Activated CD4-positive, alpha-beta T cell treated with anti-CD3 and anti-CD28 coated beads, Interleukin-2, amount 10 ng/mL, durations not matched to agents 7 days and 5 days (primary cell): ENCODE measurements at regions of chr10 and their contacts with region 1.

Region 1: DNA sequence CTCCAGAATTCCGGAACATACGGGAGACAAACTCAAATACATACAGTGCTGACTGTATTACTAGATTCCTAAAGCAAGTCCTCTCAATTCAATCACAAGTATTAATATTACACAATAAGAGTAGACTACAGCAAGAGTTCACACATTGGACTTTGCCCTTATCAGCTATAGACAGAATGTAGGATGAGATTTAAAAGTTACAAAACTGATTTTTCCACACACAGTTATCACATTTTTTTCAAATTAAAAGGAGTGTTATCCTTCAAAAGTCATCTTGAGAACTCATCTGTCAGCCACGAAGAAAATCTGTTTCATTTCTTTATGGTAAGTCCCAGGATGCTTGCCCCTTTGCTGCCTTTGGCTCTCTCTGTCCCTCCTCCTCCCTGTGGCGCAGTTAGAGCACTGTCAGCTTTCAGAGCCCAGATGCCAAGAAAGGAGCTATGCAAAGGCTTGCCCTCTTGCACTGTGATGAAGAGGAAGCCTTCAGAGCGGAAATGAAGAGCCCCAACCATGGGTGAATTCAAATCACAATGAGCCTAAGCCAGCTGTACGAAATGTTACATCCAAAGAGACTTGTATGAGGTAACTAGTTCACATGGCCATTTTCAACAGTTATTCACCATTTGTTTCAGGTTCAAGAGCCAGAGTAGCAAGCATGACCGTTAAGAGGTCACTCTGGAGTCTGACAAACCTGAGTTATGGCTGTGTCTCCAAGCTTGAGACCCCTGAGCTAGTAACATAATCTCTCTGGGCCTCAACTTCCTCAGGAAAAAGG is 10.7 kb downstream of the NCOA4 start:
- DNase-seq: peak; percentile 24
- H3K4me3 Mint-ChIP-seq: no peak overlapping the region
- H3K27ac Mint-ChIP-seq: peak overlapping the region; percentile 75
- H3K4me1 Mint-ChIP-seq: peaks cover 66% of the 10 kb centered on the region
- H3K27me3 Mint-ChIP-seq: no peaks in the 10 kb centered on the region

Region 2: GRCh38 chr10:46030091-46030937 is 10.6 kb after region 1 on chr10 and contains the start of gene NCOA4:
- CTCF ChIA-PET with region 1: interaction called, 15 read pairs
- POLR2A ChIA-PET with region 1: no interaction called
- DNase-seq: peak; percentile 98
- H3K4me3 Mint-ChIP-seq: peak within 1 kb of the TSS; percentile 98
- H3K27ac Mint-ChIP-seq: peak within 1 kb of the TSS; percentile 99
- H3K4me1 Mint-ChIP-seq: peaks cover 56% of the 10 kb centered on the region
- H3K27me3 Mint-ChIP-seq: no peaks in the 10 kb centered on the region
- total RNA-seq, gene NCOA4: 148 to 171 TPM

Region 3: GRCh38 chr10:46050941-46051623 is 31.3 kb after region 1 on chr10:
- CTCF ChIA-PET with region 1: no interaction called
- POLR2A ChIA-PET with region 1: no interaction called
- DNase-seq: no peak
- H3K4me3 Mint-ChIP-seq: no peak overlapping the region
- H3K27ac Mint-ChIP-seq: no peak overlapping the region
- H3K4me1 Mint-ChIP-seq: peaks cover 5% of the 10 kb centered on the region
- H3K27me3 Mint-ChIP-seq: no peaks in the 10 kb centered on the region

Region 4: GRCh38 chr10:46069771-46070463 is 50.2 kb after region 1 on chr10:
- CTCF ChIA-PET with region 1: no interaction called
- POLR2A ChIA-PET with region 1: no interaction called
- DNase-seq: no peak
- H3K4me3 Mint-ChIP-seq: no peak overlapping the region
- H3K27ac Mint-ChIP-seq: no peak overlapping the region
- H3K4me1 Mint-ChIP-seq: peaks cover 6% of the 10 kb centered on the region
- H3K27me3 Mint-ChIP-seq: no peaks in the 10 kb centered on the region